PC-9 (cell line): ENCODE measurements at regions of chr10 and their contacts with region 1.

Region 1: GRCh38 chr10:91923371-91924211 is at the start of gene BTAF1:
- DNase-seq: peak; percentile 68 to 77
- H3K4me3 ChIP-seq: peak within 1 kb of the TSS; percentile 93
- H3K27ac ChIP-seq: peak within 1 kb of the TSS; percentile 82
- H3K4me1 ChIP-seq: peaks cover 5% of the 10 kb centered on the region; the same call in 1 of the 2 replicates
- H3K27me3 ChIP-seq: no peaks in the 10 kb centered on the region
- CTCF ChIP-seq: no peak
- total RNA-seq, gene BTAF1: 16.7 and 19.0 TPM in 2 replicates

Region 2: GRCh38 chr10:91891285-91892001 is 32.1 kb before region 1 on chr10:
- CTCF ChIA-PET with region 1: no interaction called
- POLR2A ChIA-PET with region 1: no interaction called
- intact Hi-C with region 1: no loop called
- DNase-seq: peak in 1 of 2 experiments; percentile 72
- H3K4me3 ChIP-seq: no peak overlapping the region
- H3K27ac ChIP-seq: peak overlapping the region; percentile 50
- H3K4me1 ChIP-seq: peaks cover 13% of the 10 kb centered on the region; the same call in 1 of the 2 replicates
- H3K27me3 ChIP-seq: no peaks in the 10 kb centered on the region
- CTCF ChIP-seq: no peak

Region 3: GRCh38 chr10:92003258-92003657 is 79.7 kb after region 1 on chr10:
- CTCF ChIA-PET with region 1: no interaction called
- POLR2A ChIA-PET with region 1: interaction called, 14 read pairs
- intact Hi-C with region 1: no loop called
- DNase-seq: no peak
- H3K4me3 ChIP-seq: no peak overlapping the region
- H3K27ac ChIP-seq: no peak overlapping the region
- H3K4me1 ChIP-seq: no peaks in the 10 kb centered on the region
- H3K27me3 ChIP-seq: no peaks in the 10 kb centered on the region
- CTCF ChIP-seq: no peak